Transverse colon (tissue), 4 donors: ENCODE measurements at regions of chr6 and their contacts with region 1.

Region 1: DNA sequence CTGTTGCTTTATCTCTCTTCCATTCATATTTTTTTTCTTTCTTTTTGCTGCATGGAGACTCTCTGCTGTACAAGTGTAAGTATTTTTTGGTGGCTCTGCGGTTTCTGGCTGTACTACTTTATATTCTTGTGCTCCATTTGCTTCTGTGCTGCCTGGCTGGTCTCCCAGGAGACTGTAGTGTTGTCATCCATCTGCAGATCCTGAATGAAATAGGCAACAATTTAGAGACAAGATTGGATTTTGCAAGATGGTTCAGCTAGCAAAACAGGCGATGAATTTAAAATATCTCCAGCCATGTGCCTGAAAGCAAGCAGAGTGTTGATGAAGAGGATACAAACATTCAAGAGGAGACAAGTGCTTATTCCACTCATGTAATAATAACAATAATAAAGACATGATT is 75.1 kb upstream of the SCGN start:
- DNase-seq: no peak
- H3K4me3 ChIP-seq: no peak overlapping the region
- H3K27ac ChIP-seq: no peak overlapping the region
- H3K4me1 ChIP-seq: no peaks in the 10 kb centered on the region
- H3K27me3 ChIP-seq: no peaks in the 10 kb centered on the region
- CTCF ChIP-seq: no peak
- EP300 ChIP-seq: no peak
- POLR2A ChIP-seq: no peak

Region 2: DNA sequence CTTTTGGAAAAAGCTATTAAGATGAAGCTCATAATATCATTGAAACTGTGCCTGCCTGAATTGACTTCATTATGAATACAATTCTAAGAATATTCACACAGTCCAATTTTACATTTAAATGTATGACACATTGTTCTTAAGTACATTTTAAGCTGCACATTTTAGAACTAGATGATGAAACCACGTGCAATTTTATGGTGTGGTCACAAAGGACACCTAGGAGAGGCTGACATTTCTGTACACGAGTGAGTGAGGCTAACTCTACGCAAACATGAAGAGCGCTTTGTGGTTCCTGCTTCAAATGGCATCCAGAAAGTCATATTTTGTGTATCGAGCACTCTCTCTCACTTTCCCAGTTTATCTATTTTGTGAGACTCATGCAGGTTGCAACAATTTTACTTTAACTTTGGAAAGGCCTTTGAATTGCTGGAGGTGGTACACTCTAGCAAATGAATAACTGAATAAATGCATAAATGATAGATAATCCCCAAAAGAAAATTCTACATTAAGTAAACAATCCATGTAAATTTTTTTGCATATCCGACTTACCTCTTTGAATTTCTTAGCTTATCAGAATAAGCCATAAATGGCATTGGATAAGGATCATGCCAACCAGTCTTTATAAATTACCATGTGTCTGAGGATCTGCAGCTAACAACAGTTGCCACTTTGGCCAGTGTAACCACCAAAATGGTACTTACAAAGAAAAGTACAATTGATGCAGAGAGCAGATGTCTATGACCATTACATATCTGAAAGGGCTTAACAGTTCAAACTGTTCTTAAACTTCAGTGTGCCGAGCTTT is 1353.6 kb before region 1 on chr6:
- in situ Hi-C with region 1: no loop called
- intact Hi-C with region 1: no loop called
- DNase-seq: no peak
- H3K4me3 ChIP-seq: no peak overlapping the region
- H3K27ac ChIP-seq: no peak overlapping the region
- H3K4me1 ChIP-seq: no peaks in the 10 kb centered on the region
- H3K27me3 ChIP-seq: no peaks in the 10 kb centered on the region
- CTCF ChIP-seq: no peak
- EP300 ChIP-seq: no peak
- POLR2A ChIP-seq: no peak

Region 3: GRCh38 chr6:25250878-25251277 is 326.0 kb before region 1 on chr6:
- in situ Hi-C with region 1: loop called in 1 of 4 experiments (anchors 25 kb)
- intact Hi-C with region 1: no loop called
- DNase-seq: no peak
- H3K4me3 ChIP-seq: no peak overlapping the region
- H3K27ac ChIP-seq: no peak overlapping the region
- H3K4me1 ChIP-seq: no peaks in the 10 kb centered on the region
- H3K27me3 ChIP-seq: no peaks in the 10 kb centered on the region
- CTCF ChIP-seq: no peak
- EP300 ChIP-seq: no peak
- POLR2A ChIP-seq: no peak

Region 4: GRCh38 chr6:25537349-25538018 is 39.4 kb before region 1 on chr6:
- in situ Hi-C with region 1: no loop called
- intact Hi-C with region 1: no loop called
- DNase-seq: no peak
- H3K4me3 ChIP-seq: no peak overlapping the region
- H3K27ac ChIP-seq: no peak overlapping the region
- H3K4me1 ChIP-seq: no peaks in the 10 kb centered on the region
- H3K27me3 ChIP-seq: no peaks in the 10 kb centered on the region
- CTCF ChIP-seq: no peak
- EP300 ChIP-seq: no peak
- POLR2A ChIP-seq: no peak